ENCODE measurements at regions of chr20 and their contacts with region 1.

Region 1: DNA sequence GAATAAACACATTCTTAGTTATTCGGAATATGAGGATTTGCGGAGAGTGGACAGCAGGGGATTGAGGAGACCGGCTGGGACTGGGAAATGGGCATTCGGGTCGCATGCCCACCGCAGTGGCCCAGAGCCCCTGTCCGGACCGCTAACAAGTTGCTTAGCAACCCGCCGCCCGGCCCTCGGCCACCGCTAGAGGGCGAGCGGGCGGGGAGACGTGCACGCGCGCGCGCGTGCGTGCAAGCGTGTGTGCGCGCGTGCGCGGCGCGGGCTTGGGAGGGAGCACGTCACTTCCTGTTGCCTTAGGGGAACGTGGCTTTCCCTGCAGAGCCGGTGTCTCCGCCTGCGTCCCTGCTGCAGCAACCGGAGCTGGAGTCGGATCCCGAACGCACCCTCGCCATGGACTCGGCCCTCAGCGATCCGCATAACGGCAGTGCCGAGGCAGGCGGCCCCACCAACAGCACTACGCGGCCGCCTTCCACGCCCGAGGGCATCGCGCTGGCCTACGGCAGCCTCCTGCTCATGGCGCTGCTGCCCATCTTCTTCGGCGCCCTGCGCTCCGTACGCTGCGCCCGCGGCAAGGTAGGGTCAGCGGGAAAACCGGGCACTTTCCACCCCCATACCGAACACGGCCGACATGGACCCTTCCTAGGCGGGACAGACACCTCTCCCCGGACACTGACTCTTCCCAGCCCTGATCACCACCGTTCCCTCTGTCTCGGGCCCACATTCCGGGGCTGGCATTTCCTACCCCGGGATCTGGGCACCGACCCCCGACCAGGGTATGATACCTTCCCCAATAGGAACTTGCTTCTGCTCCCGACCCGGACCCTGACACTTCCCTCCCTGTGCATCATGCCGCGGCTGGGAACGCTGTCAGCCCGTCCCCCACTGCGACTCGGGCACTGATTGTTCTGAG is at the start of gene HM13:
- DNase-seq: peak; percentile 86
- H3K4me3 Mint-ChIP-seq: peak within 1 kb of the TSS; percentile 61
- H3K27ac Mint-ChIP-seq: no peak within 1 kb of the TSS
- H3K4me1 Mint-ChIP-seq: peaks cover 2% of the 10 kb centered on the region
- H3K27me3 Mint-ChIP-seq: peaks cover 2% of the 10 kb centered on the region
- total RNA-seq, gene HM13: 184 and 188 TPM in 2 replicates

Region 2: GRCh38 chr20:31542201-31542842 is 27.9 kb after region 1 on chr20:
- intact Hi-C with region 1: loop called (anchors 1 kb)
- DNase-seq: no peak
- H3K4me3 Mint-ChIP-seq: peak overlapping the region; percentile 38
- H3K27ac Mint-ChIP-seq: peak overlapping the region; percentile 82
- H3K4me1 Mint-ChIP-seq: peaks cover 39% of the 10 kb centered on the region
- H3K27me3 Mint-ChIP-seq: no peaks in the 10 kb centered on the region